Gastrocnemius medialis (tissue), 4 donors: ENCODE measurements at regions of chr1 and their contacts with region 1.

Region 1: DNA sequence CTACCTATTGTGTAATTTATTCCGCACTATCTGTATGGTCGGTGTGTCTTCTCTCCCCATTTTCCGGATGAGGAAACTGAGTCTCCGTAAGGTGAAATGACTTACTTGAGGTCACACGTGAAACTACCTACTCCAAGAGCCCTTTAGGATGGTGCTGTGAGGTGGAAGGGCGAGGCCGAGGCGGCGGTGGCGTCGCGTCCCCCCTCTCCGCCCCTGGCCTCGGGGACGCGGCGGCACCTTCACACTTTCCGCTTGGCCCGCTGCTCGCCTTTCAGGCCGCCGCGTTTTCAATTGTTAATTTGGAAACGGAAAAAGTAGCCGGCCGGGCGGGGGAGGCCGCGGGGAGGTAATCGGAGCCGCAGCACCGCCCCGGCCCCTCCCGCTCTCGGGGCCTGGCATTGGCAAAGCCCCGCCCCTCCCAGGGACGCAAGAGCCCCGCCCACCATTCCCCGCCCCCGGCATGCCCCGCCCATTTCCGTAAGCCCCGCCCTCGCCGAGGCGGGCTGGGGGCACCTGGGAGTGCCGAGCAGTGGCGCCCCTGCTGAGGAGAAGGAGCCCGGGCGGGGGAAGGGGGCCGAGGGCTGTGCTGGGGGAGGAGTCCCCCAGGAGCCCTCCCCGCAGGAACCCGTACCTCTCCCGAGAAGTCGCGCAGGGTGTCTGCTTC is 18.6 kb downstream of the KCNQ4 start:
- DNase-seq: peak; percentile 76 to 86
- ATAC-seq: peak; percentile 80 to 88
- H3K4me3 ChIP-seq: peak overlapping the region; percentile 53 to 67 (median 56)
- H3K27ac ChIP-seq: peak overlapping the region; percentile 76 to 89 (median 86)
- H3K4me1 ChIP-seq: peaks cover 51 to 54% of the 10 kb centered on the region in 2 donors
- H3K27me3 ChIP-seq: no peaks in the 10 kb centered on the region
- CTCF ChIP-seq: no peak
- POLR2A ChIP-seq: no peak

Region 2: DNA sequence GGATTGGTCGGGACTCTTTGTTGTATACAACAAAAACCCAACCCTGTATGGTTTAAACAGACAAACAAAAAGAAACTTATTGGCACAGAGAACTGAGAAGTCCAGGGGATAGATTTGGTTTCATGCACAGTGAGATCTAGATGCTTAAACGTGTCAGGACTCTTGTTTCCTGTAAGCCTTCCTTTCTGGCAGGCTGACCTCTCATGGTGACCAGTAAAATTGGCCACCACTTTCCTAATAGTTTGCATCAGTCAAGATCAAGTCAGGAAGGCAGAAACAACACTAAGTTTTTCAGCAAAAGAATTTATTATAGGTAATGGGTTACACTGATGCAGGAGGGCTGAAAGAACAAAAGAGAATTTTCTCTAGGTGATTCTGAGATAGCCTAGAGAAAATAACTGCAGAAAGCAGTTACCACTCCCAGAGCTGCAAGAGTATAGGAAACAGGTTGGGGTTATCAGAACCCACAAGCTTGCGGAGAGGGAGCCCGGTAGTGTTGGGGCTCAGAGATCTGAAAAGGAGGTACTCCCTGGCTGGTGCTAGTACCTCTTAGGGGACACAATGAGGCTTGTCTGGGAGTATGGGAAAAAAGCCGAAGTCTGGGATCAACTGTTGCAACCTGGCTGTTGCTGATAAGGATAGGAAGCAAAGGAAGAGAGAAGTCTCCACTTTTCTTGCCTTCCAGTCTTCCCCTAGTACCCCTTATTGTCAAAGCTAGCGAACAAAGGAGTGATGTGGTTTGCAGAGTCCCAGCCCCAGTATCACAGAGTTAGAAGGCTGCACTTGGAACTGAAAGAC is 38.5 kb after region 1 on chr1:
- in situ Hi-C with region 1: no loop called
- intact Hi-C with region 1: loop called (anchors 1 kb)
- DNase-seq: no peak
- ATAC-seq: no peak
- H3K4me3 ChIP-seq: no peak overlapping the region
- H3K27ac ChIP-seq: no peak overlapping the region
- H3K4me1 ChIP-seq: no peaks in the 10 kb centered on the region
- H3K27me3 ChIP-seq: no peaks in the 10 kb centered on the region
- CTCF ChIP-seq: no peak
- POLR2A ChIP-seq: no peak

Region 3: GRCh38 chr1:40862008-40862863 is 60.0 kb after region 1 on chr1 and contains the start of gene CITED4:
- in situ Hi-C with region 1: no loop called
- intact Hi-C with region 1: loop called (anchors 5 kb)
- DNase-seq: peak; percentile 90 to 96
- ATAC-seq: peak; percentile 85 to 90
- H3K4me3 ChIP-seq: peak within 1 kb of the TSS; percentile 53 to 84 (median 71)
- H3K27ac ChIP-seq: peak within 1 kb of the TSS; percentile 81 to 93 (median 85)
- H3K4me1 ChIP-seq: peaks cover 11 to 18% of the 10 kb centered on the region in 2 donors
- H3K27me3 ChIP-seq: no peaks in the 10 kb centered on the region
- CTCF ChIP-seq: peak in 1 of 5 experiments; percentile 27
- POLR2A ChIP-seq: peak; percentile 95 to 97
- total RNA-seq, gene CITED4: 15.9 to 30.8 (median 23.1) TPM

Region 4: DNA sequence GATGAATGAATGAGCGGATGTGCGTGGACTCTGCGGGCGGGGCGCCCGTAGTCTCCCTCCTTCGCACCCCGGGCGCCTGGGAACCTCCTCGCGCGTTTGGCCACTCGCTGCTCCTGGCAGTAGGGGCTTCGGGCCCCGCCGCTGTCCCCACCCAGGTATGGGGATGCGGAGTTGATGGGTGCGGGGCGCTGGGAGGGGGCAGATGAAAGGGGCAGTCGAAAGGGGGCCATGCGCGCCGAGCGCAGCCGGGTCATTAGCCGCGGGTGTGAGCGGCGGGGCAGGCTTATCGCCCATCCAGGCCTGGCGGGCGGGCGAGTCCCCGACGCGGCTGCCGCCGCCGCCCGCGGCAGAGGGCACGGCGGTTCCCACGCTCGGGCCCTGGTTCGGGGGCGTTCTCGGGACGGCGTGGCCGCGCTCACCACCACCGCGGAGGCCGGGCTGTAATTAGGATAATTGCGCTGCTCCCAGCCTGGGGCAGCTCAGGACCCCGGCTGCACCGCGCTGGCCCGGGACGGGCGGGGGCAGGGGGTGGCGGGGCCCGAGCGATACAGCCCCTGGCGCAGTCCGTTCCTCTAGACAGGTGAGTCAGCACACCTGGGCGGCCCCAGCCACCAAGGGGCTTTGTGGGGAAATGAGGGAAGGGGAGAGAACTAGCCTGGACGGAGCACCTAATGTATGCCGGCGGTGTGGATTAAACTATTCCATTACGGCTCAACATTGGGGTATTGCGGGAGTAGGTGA is 82.0 kb after region 1 on chr1:
- in situ Hi-C with region 1: no loop called
- intact Hi-C with region 1: no loop called
- DNase-seq: no peak
- ATAC-seq: no peak
- H3K4me3 ChIP-seq: no peak overlapping the region
- H3K27ac ChIP-seq: no peak overlapping the region
- H3K4me1 ChIP-seq: no peaks in the 10 kb centered on the region
- H3K27me3 ChIP-seq: peaks cover 16 to 22% (median 16%) of the 10 kb centered on the region in 3 donors
- CTCF ChIP-seq: no peak
- POLR2A ChIP-seq: no peak

Region 5: DNA sequence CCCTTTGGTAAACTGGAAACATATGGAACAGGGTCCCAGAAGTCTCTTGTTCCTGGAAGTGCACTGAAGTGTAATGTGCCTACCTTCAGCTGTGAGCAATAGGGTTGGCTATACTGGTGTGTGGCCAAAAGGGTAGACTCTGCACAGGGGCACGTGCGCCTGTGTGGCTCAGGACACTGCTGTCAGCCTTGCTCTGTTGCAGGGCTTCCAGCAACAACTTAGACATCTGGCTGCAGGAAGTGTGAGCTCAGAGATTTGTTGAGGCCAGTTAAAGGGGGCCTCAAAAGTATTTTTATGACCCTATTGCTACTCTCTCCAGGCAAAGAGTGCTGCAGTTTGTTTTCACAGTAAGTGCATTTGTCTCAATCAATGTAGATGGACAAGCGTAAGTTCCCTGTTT is 184.7 kb after region 1 on chr1:
- in situ Hi-C with region 1: no loop called
- intact Hi-C with region 1: no loop called
- DNase-seq: no peak
- ATAC-seq: no peak
- H3K4me3 ChIP-seq: no peak overlapping the region
- H3K27ac ChIP-seq: no peak overlapping the region
- H3K4me1 ChIP-seq: no peaks in the 10 kb centered on the region
- H3K27me3 ChIP-seq: no peaks in the 10 kb centered on the region
- CTCF ChIP-seq: no peak
- POLR2A ChIP-seq: no peak